ENCODE measurements at regions of chr1 and their contacts with region 1.

Region 1: DNA sequence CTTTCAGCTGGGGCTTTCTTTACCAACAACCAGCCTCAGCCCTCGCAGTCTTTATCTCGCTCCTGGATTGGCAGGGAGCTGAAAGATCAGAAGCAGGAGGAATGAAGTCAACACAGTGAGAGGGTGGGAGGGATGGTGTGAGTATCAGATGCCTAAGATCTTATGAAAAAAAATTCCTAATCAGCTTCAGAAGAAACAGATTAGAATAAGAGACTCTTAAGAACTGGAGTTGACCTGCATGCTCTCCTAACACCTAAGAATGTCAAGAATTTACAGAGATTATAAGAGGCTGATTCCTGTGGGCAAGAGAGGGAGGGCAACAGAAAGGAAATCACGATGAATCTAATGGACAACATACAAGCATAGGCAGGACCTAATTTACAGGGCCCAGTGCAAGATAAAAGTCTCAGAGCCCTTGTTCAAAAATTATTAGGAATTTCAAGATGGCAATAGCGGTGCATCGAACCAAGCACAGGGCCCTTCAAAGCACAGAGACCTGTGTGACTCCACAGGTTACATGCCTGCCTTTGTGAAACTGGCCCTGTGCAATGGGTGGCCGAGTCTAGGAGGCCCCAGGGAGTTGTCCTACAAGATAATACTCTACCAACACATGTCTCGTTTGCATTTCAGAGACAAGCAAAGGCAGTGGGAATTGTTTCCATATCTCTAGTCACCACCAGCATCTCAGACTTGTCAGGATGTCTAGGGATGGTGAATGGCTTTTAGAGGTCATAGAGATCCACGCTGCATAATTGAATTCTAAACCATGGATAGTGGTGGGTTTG is 65.3 kb upstream of the PPP2R5A start:
- DNase-seq: no peak
- ATAC-seq: no peak
- H3K4me3 ChIP-seq: no peak overlapping the region
- H3K4me3 Mint-ChIP-seq: no peak overlapping the region
- H3K27ac ChIP-seq: no peak overlapping the region
- H3K27ac Mint-ChIP-seq: no peak overlapping the region
- H3K4me1 ChIP-seq: peaks cover 0 to 2% of the 10 kb centered on the region in 2 donors
- H3K4me1 Mint-ChIP-seq: peaks cover 11 to 36% (median 22%) of the 10 kb centered on the region in 7 donors
- H3K27me3 ChIP-seq: no peaks in the 10 kb centered on the region
- H3K27me3 Mint-ChIP-seq: no peaks in the 10 kb centered on the region

Region 2: GRCh38 chr1:212162635-212163034 is 57.2 kb before region 1 on chr1:
- CTCF ChIA-PET with region 1: no interaction called
- POLR2A ChIA-PET with region 1: no interaction called
- intact Hi-C with region 1: loop called in 1 of 2 experiments (anchors 10 kb)
- DNase-seq: peak in 7 of 9 donors; percentile 1 to 31 (median 23)
- ATAC-seq: no peak
- H3K4me3 ChIP-seq: peak overlapping the region; percentile 0
- H3K4me3 Mint-ChIP-seq: peak overlapping the region in 8 of 10 donors; percentile 27 to 77 (median 54)
- H3K27ac ChIP-seq: no peak overlapping the region
- H3K27ac Mint-ChIP-seq: peak overlapping the region in 6 of 9 donors; percentile 6 to 46 (median 28)
- H3K4me1 ChIP-seq: peaks cover 11 to 26% of the 10 kb centered on the region in 2 donors
- H3K4me1 Mint-ChIP-seq: peaks cover 17 to 40% (median 30%) of the 10 kb centered on the region in 7 donors
- H3K27me3 ChIP-seq: no peaks in the 10 kb centered on the region
- H3K27me3 Mint-ChIP-seq: no peaks in the 10 kb centered on the region

Measured in naive thymus-derived CD4-positive, alpha-beta T cell (primary cell).